WTC11 (cell line): ENCODE measurements at regions of chr17 and their contacts with region 1.

Region 1: GRCh38 chr17:57671667-57672632 is 73.1 kb downstream of the CCDC182 start:
- DNase-seq: peak; percentile 92
- ATAC-seq: peak; percentile 99
- H3K4me3 Mint-ChIP-seq: no peak overlapping the region
- H3K27ac Mint-ChIP-seq: no peak overlapping the region
- H3K4me1 Mint-ChIP-seq: peaks cover 14% of the 10 kb centered on the region
- H3K27me3 Mint-ChIP-seq: no peaks in the 10 kb centered on the region
- CTCF ChIP-seq: peak; percentile 91

Region 2: GRCh38 chr17:57468932-57469775 is 202.8 kb before region 1 on chr17:
- CTCF ChIA-PET with region 1: interaction called, 15 read pairs
- POLR2A ChIA-PET with region 1: no interaction called
- DNase-seq: no peak
- ATAC-seq: no peak
- H3K4me3 Mint-ChIP-seq: no peak overlapping the region
- H3K27ac Mint-ChIP-seq: no peak overlapping the region
- H3K4me1 Mint-ChIP-seq: peaks cover 90% of the 10 kb centered on the region
- H3K27me3 Mint-ChIP-seq: peaks cover 5% of the 10 kb centered on the region
- CTCF ChIP-seq: no peak

Region 3: DNA sequence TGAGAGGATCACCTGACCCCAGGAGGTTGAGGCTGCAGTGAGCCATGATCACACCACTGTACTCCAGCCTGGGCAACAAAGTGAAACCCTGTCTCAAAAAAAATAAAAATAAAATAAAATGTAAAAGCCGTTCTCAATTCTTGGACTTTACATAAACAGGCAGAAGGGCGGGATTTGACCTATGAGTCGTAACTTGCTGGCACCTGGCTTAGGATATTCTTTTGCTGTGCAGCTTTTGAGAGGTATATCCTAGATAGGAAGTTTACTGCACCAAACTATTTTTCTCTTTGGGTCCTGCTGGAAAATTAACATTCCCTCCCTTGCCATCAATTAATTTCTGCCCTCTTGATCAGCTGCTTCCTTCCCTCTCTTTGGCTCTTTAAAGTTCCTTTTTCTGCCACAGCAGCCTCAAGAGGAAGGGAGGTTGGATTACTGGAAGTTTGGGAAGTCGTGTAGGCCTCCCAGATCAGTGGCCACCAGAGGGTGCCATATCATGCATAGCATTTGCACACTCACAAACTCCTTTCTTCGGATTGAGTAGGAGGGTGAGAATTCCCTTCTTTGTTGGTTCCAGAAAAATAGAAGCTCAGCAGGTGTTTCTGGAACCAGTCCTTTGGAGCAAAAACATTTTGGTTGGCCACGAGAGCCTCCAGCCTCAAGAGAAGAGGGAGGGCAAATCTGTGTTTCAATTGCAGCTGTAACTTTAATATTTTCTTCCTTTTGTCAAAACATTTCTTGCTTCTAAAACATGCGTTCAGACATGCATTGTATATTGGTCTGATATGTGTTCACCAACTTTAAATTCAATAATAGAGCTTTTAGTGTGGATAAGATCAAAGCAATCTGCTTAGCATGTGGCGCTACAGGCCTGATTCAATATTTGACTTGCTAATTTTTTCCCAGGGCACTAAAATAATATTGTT is 74.2 kb before region 1 on chr17:
- CTCF ChIA-PET with region 1: interaction called, 107 read pairs
- POLR2A ChIA-PET with region 1: interaction called, 3 read pairs
- DNase-seq: peak; percentile 80
- ATAC-seq: peak; percentile 74
- H3K4me3 Mint-ChIP-seq: no peak overlapping the region
- H3K27ac Mint-ChIP-seq: peak overlapping the region; percentile 54; the same call in 1 of the 2 replicates
- H3K4me1 Mint-ChIP-seq: peaks cover 14% of the 10 kb centered on the region
- H3K27me3 Mint-ChIP-seq: no peaks in the 10 kb centered on the region
- CTCF ChIP-seq: peak; percentile 56; the same call in 1 of the 2 replicates

Region 4: GRCh38 chr17:57636985-57637665 is 34.8 kb before region 1 on chr17:
- CTCF ChIA-PET with region 1: interaction called, 46 read pairs
- POLR2A ChIA-PET with region 1: no interaction called
- DNase-seq: no peak
- ATAC-seq: peak; percentile 22
- H3K4me3 Mint-ChIP-seq: no peak overlapping the region
- H3K27ac Mint-ChIP-seq: peak overlapping the region; percentile 92
- H3K4me1 Mint-ChIP-seq: peaks cover 18% of the 10 kb centered on the region
- H3K27me3 Mint-ChIP-seq: no peaks in the 10 kb centered on the region
- CTCF ChIP-seq: no peak

Region 5: GRCh38 chr17:57727630-57728175 is 55.8 kb after region 1 on chr17:
- CTCF ChIA-PET with region 1: interaction called, 17 read pairs
- POLR2A ChIA-PET with region 1: no interaction called
- DNase-seq: no peak
- ATAC-seq: no peak
- H3K4me3 Mint-ChIP-seq: no peak overlapping the region
- H3K27ac Mint-ChIP-seq: no peak overlapping the region
- H3K4me1 Mint-ChIP-seq: no peaks in the 10 kb centered on the region
- H3K27me3 Mint-ChIP-seq: no peaks in the 10 kb centered on the region; the same call in 1 of the 2 replicates
- CTCF ChIP-seq: no peak

Region 6: DNA sequence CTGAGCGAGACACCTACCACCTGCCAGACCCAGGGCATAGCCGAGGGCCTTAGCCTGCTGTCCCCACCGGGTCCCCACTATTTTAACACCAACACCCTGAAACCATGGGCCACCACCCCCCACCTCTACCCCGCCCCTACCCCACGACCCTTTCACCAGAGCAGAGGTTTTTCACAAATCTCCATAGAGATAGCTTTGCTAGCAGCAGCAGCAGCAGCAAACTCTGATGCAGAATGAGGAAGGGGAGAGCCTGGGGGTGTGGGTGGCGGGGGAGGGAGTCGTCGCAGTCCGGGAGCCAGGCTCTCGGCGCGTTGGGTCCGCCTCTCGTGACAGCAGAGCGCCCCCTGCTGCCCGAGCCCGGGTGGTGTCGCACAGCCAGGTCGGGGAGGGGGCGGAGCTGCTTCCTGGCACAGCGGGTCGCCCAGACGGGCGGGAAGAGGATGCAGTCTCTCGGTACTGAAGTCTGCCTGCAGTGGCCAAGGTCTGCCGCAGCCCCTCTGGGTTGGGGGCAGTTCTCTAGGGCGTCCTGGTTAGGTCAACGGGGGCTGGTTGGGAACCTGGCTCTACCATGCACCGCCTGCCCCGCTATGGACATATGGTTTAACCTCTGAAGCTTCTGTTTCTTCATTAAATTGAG is 111.3 kb after region 1 on chr17:
- CTCF ChIA-PET with region 1: interaction called, 23 read pairs
- POLR2A ChIA-PET with region 1: no interaction called
- DNase-seq: peak; percentile 95
- ATAC-seq: peak; percentile 95
- H3K4me3 Mint-ChIP-seq: peak overlapping the region; percentile 17
- H3K27ac Mint-ChIP-seq: no peak overlapping the region
- H3K4me1 Mint-ChIP-seq: peaks cover 9% of the 10 kb centered on the region
- H3K27me3 Mint-ChIP-seq: peaks cover 19% of the 10 kb centered on the region
- CTCF ChIP-seq: peak; percentile 93